Stomach (tissue), 19 donors: ENCODE measurements at regions of chr16 and their contacts with region 1.

Region 1: DNA sequence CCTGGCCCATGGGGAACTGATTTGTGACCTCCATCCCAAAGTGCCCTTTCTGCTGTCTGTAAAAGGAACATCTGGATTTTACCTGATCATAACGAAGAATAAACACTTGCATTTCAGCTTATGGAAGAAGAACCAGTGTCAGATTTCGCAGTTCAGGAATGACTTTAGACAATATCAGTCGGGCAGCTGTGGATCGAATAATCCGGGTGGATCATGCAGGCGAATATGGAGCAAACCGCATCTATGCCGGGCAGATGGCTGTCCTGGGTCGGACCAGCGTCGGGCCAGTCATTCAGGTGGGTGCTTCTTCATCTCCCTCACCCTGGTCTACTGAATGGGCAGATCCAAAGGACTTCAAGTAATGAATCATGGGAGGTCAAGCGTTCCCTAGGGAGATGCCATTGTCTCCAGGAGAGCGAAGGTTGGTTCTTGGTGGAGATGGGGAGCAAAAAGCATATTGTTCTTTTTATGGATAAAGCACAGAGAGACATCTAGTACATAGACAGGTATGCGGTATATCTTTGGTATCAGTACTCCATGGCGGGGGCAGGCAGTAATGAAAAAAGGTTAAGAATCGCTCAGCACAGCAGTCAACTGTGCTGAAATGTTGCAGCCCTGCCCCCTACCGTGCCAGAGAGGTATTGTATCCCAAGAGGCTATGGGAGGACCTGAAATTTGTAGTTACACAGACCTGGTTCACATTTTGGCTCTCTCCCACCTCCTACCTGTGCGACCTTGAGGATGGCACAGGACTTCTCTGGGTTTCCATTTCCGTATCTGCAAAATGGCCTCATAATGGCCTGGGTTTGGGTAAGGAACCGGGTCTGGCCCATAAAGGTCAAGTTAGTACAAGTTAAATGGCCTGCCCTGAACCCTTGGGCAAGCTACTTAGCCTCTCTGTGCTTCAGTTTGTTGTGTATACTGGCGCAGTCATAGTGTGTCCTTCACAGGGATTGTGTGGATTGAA is 4.7 kb downstream of the COQ7 start:
- DNase-seq: peak; percentile 70 to 83
- H3K4me3 ChIP-seq: no peak overlapping the region
- H3K27ac ChIP-seq: no peak overlapping the region
- H3K4me1 ChIP-seq: peaks cover under 1 to 39% (median 21%) of the 10 kb centered on the region in 4 donors
- H3K27me3 ChIP-seq: no peaks in the 10 kb centered on the region
- CTCF ChIP-seq: peak in 5 of 7 experiments; percentile 43 to 74 (median 48)
- EP300 ChIP-seq: no peak
- POLR2A ChIP-seq: no peak

Region 2: DNA sequence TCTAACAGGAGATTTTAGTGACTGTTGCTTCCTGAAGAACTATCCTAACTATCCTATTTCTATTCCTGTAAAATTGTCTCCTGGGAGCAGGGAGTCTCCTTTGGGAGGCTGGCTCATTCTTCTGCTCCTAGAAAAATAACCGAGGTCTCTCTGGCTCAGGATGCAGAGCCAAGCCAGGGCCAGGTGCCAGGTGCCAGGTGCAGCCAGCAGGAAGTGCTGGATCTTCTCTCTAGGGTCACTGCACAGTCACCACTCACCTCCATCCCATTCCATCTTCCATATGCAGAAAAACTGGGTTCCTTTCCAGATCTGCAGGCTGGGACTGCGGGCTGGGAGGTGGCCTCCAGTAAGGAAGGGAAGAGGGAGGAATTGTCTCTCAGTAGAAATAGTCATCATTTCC is 92.2 kb before region 1 on chr16:
- intact Hi-C with region 1: loop called (anchors 10 kb)
- DNase-seq: peak in 1 of 2 donors; percentile 42
- H3K4me3 ChIP-seq: no peak overlapping the region
- H3K27ac ChIP-seq: no peak overlapping the region
- H3K4me1 ChIP-seq: peaks cover 6 to 16% (median 9%) of the 10 kb centered on the region in 4 donors
- H3K27me3 ChIP-seq: peaks cover 0 to 27% (median 6%) of the 10 kb centered on the region in 3 donors
- CTCF ChIP-seq: no peak
- EP300 ChIP-seq: no peak
- POLR2A ChIP-seq: no peak

Region 3: GRCh38 chr16:19316846-19317245 is 244.8 kb after region 1 on chr16:
- intact Hi-C with region 1: no loop called
- DNase-seq: no peak
- H3K4me3 ChIP-seq: no peak overlapping the region
- H3K27ac ChIP-seq: no peak overlapping the region
- H3K4me1 ChIP-seq: no peaks in the 10 kb centered on the region
- H3K27me3 ChIP-seq: no peaks in the 10 kb centered on the region
- CTCF ChIP-seq: no peak
- EP300 ChIP-seq: no peak
- POLR2A ChIP-seq: no peak